ENCODE measurements at regions of chr11 and their contacts with region 1.

Region 1: DNA sequence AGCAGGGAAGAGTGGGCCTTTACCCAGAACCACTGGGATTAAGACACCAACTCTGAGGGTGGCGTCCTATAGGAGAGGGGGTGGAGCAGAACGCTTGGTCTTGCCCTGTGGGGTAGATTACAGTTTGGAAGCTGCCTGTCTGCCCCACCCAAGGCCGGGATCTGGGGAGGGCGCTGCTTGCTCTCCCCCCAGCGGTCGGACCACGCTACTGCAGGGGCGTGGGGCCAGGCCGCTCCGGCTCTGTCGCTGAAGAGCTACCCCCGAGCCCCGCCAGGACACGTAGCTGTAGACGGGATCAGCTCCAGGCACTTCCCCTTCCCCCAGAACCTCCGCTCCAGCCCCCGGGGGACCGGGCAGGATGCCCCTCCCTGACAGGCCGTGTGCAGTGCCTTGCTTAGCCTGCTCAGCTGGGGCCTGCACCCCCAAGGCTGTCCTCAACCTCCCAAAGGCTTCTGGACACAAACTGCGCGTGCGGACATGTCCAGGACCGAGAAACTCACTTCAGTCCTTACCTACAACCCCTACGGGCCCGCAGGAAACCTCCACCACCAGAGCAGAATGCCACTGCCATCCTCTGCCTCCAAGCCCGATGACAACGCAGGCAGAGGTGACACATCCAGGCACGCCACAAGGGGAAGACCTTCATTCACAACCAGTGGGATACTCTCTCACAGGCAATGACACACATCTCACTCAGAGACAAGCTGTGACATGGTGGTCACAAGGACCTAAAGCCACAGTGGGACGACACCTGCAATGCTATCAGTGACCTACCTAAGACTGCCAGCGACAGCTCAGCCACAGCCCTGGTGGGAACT is 3.6 kb downstream of the AHNAK start:
- DNase-seq: peak; percentile 92
- ATAC-seq: peak; percentile 19
- H3K4me3 ChIP-seq: peak overlapping the region; percentile 96
- H3K27ac ChIP-seq: peak overlapping the region; percentile 94
- H3K4me1 ChIP-seq: peaks cover 72% of the 10 kb centered on the region
- H3K27me3 ChIP-seq: no peaks in the 10 kb centered on the region
- CTCF ChIP-seq: peak; percentile 98

Region 2: DNA sequence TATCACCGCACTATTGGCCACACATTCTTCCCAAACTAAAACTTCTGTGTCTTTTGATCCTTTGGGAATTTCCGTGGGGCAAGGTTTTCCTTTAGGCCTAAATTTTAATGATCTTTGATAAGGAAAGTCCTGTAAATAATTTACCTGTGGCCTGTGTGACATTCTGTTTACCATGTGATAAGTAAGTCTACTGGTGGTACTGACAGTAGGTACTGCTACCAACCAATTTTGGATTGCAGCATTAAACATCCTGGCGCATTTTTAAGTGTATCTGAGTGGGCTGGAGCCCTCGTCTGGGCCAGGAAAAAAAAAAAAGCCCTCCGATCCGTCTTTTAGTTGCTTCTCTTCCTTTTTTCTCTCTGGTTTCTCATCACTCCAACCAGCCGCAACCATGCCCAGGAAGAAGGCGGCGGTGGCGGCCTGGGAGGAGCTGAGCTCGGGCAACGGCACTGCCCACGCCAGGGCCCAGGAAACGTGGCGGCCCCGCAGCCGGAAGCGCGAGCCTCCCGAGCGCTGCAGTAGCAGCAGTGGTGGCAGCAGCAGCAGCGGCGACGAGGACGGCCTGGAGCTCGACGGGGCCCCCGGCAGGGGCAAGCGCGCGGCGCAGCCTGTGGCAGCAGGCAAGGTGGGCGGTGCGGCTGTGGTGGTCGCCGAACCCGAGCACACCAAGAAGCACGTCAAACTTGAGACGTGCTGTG is 172.1 kb before region 1 on chr11:
- CTCF ChIA-PET with region 1: interaction called, 16 read pairs
- POLR2A ChIA-PET with region 1: no interaction called
- intact Hi-C with region 1: no loop called
- DNase-seq: no peak
- ATAC-seq: no peak
- H3K4me3 ChIP-seq: no peak overlapping the region
- H3K27ac ChIP-seq: no peak overlapping the region
- H3K4me1 ChIP-seq: no peaks in the 10 kb centered on the region
- H3K27me3 ChIP-seq: no peaks in the 10 kb centered on the region
- CTCF ChIP-seq: no peak

Region 3: DNA sequence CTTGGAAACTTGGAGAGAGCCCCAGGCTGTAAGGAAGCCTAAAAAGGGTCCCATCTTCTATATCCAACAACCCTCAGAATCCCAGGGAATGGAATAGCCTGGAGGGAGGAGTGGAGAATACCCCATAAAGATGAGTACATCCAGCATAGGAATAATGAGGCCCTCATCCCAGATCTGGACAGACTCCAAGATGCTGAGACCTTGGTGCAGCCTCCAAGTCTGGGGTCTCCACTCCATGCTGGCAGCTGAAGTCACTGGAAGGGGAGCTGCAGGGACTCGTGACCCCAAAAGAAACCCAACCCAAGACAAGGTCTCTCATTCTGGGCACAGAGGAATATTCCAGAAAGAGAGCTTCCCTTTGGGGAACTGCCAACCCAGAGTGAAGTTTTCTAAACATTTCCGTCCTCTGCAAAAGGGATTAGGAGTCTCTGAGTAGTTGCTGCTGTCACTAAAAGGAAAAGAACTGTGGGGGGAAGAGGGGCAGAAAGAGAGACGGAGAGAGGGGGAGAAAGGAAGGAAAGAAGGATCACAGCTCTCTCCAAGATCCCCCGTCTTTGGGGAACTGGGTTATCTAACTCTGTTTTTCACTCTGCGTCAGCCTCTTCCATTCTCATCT is 123.5 kb before region 1 on chr11:
- CTCF ChIA-PET with region 1: interaction called, 64 read pairs
- POLR2A ChIA-PET with region 1: interaction called, 3 read pairs
- intact Hi-C with region 1: loop called (anchors 1 kb)
- DNase-seq: no peak
- ATAC-seq: no peak
- H3K4me3 ChIP-seq: no peak overlapping the region
- H3K27ac ChIP-seq: no peak overlapping the region
- H3K4me1 ChIP-seq: no peaks in the 10 kb centered on the region
- H3K27me3 ChIP-seq: no peaks in the 10 kb centered on the region
- CTCF ChIP-seq: no peak

Region 4: GRCh38 chr11:62435846-62436660 is 106.9 kb before region 1 on chr11:
- CTCF ChIA-PET with region 1: no interaction called
- POLR2A ChIA-PET with region 1: no interaction called
- intact Hi-C with region 1: no loop called
- DNase-seq: no peak
- ATAC-seq: no peak
- H3K4me3 ChIP-seq: no peak overlapping the region
- H3K27ac ChIP-seq: no peak overlapping the region
- H3K4me1 ChIP-seq: peaks cover 19% of the 10 kb centered on the region
- H3K27me3 ChIP-seq: no peaks in the 10 kb centered on the region
- CTCF ChIP-seq: no peak

Region 5: GRCh38 chr11:62449451-62449851 is 93.5 kb before region 1 on chr11:
- CTCF ChIA-PET with region 1: interaction called, 10 read pairs
- POLR2A ChIA-PET with region 1: interaction called, 4 read pairs
- intact Hi-C with region 1: no loop called
- DNase-seq: peak; percentile 96
- ATAC-seq: peak; percentile 84
- H3K4me3 ChIP-seq: no peak overlapping the region
- H3K27ac ChIP-seq: peak overlapping the region; percentile 21; the same call in 1 of the 2 replicates
- H3K4me1 ChIP-seq: peaks cover 29% of the 10 kb centered on the region
- H3K27me3 ChIP-seq: no peaks in the 10 kb centered on the region
- CTCF ChIP-seq: no peak

Region 6: DNA sequence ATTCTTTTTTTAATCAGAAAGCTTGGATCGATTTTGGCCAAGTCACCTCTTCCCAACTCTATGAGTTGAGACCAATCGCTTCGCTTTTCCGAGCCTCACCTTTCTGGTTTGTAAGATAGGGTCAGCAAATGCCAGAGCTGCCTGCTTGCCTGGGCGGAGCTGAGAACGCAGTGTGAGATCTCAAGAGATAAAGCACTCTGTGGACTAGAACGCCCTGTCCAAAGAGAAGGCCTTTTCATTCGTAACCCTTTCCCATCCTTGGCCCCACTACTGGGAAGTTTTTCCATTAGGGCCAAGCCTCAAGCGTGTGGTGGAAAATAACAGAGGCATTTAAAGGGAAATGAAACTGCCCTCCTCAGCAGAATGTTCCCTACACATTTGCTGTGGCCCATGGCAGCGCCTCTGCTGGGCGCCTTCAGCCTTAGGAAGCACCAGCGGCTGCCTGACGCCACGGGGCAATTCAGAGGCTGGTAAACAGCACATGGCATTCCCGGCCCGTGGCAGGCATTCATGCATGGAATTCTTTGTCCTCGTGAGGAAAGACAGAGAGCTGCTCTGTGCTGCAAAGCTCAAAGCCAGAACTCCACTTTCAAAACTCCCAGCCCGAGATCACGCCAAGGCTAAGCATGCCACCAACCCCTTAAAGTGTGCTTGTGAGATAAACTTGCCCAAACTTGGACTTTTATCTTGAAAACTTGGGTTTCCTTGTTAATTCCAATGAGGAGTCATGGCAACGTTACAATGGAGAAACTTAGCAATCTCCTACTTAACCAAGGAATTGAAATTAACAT is 34.5 kb before region 1 on chr11:
- CTCF ChIA-PET with region 1: interaction called, 10 read pairs
- POLR2A ChIA-PET with region 1: interaction called, 4 read pairs
- intact Hi-C with region 1: loop called (anchors 1 kb)
- DNase-seq: peak; percentile 85
- ATAC-seq: peak; percentile 83
- H3K4me3 ChIP-seq: peak overlapping the region; percentile 32
- H3K27ac ChIP-seq: peak overlapping the region; percentile 53
- H3K4me1 ChIP-seq: peaks cover 25% of the 10 kb centered on the region
- H3K27me3 ChIP-seq: no peaks in the 10 kb centered on the region
- CTCF ChIP-seq: peak; percentile 75